AG04449 (cell line): ENCODE measurements at regions of chr5 and their contacts with region 1.

Region 1: DNA sequence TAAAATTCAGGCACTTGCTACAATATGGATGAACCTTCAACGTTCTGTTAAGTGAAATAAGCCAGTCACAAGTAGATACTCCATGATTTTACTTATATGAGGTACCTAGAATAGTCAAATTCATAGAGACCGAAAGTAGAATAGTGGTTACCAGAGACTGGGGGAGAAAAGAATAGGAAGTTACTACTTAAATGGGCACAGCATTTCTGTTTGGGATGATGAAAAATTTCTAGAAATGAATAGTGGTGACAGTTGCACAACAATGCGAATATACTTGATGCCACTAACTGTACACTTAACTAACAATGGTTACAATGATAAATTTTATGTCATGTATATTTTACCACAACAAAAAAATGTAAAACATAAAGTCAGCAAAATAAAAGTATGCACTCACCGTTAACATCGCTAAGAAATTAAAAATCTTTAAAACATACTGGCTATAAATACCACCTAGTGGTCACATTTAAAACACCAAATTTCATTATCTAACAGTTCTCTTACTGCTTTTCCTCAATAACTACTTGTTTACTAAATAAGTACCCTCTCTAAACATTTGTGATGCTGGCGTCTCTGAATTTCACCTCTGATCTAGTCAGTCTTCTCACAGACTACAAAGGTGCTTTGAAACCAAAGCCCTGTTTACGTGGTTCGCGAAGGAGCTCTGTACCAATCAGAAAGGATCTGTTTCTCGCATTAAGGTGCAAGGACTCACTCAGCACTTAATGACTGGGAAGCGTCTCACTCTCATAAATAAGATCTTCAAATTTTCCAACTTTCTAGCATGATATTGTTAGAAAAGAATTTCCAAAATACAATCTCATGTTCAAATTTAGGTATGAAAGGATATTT is 22.7 kb downstream of the KIF3A start:
- DNase-seq: no peak
- H3K4me3 ChIP-seq: no peak overlapping the region
- CTCF ChIP-seq: no peak

Region 2: DNA sequence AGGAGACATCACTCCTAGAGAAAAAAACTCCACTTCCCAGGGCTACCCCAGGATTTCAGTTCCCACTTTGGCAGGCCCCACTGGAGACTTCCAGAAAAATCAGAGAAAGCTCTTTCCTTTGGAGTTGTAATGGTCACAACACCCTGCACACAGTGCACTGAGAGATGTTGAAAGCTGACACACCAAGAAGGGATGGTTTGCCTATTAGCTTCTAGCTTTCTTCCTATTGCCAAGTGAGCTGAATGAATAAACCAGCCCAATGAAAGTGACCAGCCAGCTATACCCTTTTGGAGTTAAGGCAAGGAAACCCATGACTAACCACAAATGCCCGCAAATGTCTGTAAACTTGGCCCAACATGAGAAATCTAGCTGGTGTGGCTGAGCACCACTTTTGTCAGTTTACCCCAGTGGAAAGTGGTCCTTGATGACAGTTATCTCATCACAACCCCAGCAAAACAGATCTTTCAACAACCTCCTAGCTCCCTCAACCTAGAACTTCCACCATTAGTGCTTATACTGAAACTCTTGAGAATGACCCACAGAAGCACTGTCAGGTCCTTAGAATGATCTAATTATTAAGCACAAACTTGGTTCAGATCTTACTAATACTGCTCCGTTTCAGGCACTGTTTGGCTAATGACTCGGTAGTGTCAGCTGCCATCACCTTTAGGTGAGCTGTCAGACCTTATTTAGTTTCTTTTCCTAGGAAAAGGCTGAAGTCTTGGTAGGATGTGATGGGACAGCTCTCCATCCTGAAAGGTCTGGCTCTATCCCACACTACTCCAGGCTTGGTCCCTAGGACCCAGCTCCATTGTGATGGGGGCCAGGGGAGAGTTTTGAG is 235.4 kb before region 1 on chr5:
- CTCF ChIA-PET with region 1: no interaction called
- POLR2A ChIA-PET with region 1: no interaction called
- DNase-seq: no peak
- H3K4me3 ChIP-seq: no peak overlapping the region
- CTCF ChIP-seq: no peak

Region 3: DNA sequence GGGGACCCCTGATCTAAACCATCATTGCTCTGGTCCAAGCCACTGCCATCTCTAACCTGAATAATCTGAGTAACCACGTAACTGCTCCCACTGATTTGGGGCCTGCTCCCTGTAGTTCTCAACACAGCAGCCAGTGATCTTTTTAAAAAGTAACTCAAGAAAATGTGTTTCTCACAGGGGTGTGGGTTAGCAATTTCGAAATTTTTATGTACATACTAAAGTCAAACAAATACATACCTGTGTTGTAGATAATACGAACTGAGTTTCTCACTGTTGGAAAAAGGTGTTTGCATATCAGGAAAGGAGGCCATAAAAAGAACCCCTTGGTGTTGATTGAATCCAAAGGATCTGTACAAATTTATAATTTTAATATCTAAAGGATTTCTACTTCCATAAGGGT is 67.8 kb before region 1 on chr5:
- CTCF ChIA-PET with region 1: no interaction called
- POLR2A ChIA-PET with region 1: no interaction called
- DNase-seq: no peak
- H3K4me3 ChIP-seq: no peak overlapping the region
- CTCF ChIP-seq: no peak

Region 4: GRCh38 chr5:132729896-132730295 is 15.2 kb after region 1 on chr5:
- CTCF ChIA-PET with region 1: interaction called, 20 read pairs
- POLR2A ChIA-PET with region 1: no interaction called
- DNase-seq: no peak
- H3K4me3 ChIP-seq: no peak overlapping the region
- CTCF ChIP-seq: no peak